ENCODE measurements at regions of chr5 and their contacts with region 1.

Region 1: DNA sequence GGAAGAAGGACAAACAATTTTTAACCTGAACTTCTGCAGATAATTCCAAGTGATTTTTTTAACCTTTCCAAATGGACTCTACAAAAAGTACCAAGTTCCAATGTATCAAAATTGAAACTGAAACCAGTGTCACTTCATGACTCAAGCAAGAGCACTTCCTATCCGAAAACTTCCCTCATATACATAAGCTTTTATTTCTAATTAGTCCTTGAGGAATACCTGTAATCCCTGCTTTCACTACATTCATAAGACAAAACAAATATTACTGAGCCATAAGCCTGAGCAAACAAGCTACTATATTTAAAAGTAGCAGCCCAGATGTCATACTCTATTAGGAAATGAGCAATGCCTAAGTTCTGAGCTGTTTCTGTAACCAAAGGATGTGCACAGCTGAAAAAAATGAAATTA is 224.4 kb downstream of the EBF1 start:
- DNase-seq: peak; percentile 70
- ATAC-seq: peak; percentile 41
- H3K4me3 ChIP-seq: peak overlapping the region in 2 of 5 experiments; percentile 12 to 34
- H3K4me3 Mint-ChIP-seq: peak overlapping the region; percentile 84
- H3K27ac ChIP-seq: peak overlapping the region; percentile 74 to 80
- H3K27ac Mint-ChIP-seq: peak overlapping the region; percentile 76
- H3K4me1 ChIP-seq: peaks cover 71 to 81% of the 10 kb centered on the region in 2 donors
- H3K4me1 Mint-ChIP-seq: peaks cover 89% of the 10 kb centered on the region
- H3K27me3 ChIP-seq: no peaks in the 10 kb centered on the region
- H3K27me3 Mint-ChIP-seq: no peaks in the 10 kb centered on the region
- CTCF ChIP-seq: no peak

Region 2: DNA sequence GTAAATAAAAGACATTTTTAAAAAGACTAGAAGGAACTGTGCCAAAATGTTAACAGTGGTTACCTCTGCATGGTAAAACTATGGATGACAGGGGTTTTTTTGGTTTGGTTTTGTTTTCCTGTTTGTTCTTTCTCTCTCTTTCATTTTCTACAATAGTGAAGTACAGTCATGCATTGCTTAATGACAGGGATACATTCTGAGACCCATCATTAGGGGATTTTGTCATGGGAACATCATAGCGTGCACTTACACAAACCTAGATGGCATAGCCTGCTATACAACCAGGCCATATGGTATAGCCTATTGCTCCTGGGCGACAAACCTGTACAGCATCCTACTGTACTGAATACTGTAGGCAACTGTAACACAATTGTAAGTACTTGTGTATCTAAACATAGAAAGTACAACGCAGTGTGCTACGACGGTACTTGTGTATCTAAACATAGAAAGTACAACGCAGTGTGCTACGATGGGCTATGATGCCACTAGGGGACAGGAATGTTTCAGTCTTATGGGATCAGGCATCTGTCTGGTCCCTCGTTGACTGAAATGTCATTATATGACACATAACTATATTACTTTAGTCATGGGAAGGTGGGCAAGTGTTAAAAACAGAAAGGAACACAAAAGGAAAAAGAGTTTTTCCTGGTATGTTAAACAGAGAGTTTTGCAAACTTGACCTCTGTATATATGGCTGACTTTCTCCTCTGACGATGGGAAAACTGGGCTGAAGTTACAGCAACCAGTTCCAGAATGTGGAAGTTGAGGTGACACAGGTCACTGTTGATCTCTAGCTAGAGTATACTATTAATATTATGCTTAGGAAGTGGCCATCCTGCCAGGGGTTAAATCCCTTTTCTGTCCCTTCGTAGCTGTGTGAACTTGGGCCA is 1292.3 kb before region 1 on chr5:
- CTCF ChIA-PET with region 1: no interaction called
- POLR2A ChIA-PET with region 1: no interaction called
- intact Hi-C with region 1: no loop called
- DNase-seq: peak; percentile 53
- ATAC-seq: peak; percentile 54
- H3K4me3 ChIP-seq: no peak overlapping the region
- H3K4me3 Mint-ChIP-seq: peak overlapping the region; percentile 41
- H3K27ac ChIP-seq: peak overlapping the region; percentile 44 to 63
- H3K27ac Mint-ChIP-seq: peak overlapping the region; percentile 57
- H3K4me1 ChIP-seq: peaks cover 40 to 56% of the 10 kb centered on the region in 2 donors
- H3K4me1 Mint-ChIP-seq: peaks cover 60% of the 10 kb centered on the region
- H3K27me3 ChIP-seq: no peaks in the 10 kb centered on the region
- H3K27me3 Mint-ChIP-seq: no peaks in the 10 kb centered on the region
- CTCF ChIP-seq: no peak

Region 3: GRCh38 chr5:158074992-158075769 is 800.1 kb before region 1 on chr5:
- CTCF ChIA-PET with region 1: interaction called, 3 read pairs
- POLR2A ChIA-PET with region 1: no interaction called
- intact Hi-C with region 1: loop called (anchors 10 kb)
- DNase-seq: peak; percentile 78
- ATAC-seq: peak; percentile 90
- H3K4me3 ChIP-seq: peak overlapping the region in 2 of 5 experiments; percentile 10 to 20
- H3K4me3 Mint-ChIP-seq: peak overlapping the region; percentile 12
- H3K27ac ChIP-seq: no peak overlapping the region
- H3K27ac Mint-ChIP-seq: peak overlapping the region; percentile 43
- H3K4me1 ChIP-seq: peaks cover 12 to 20% of the 10 kb centered on the region in 2 donors
- H3K4me1 Mint-ChIP-seq: peaks cover 21% of the 10 kb centered on the region
- H3K27me3 ChIP-seq: peaks cover 0 to 3% (median 0%) of the 10 kb centered on the region in 4 experiments
- H3K27me3 Mint-ChIP-seq: no peaks in the 10 kb centered on the region
- CTCF ChIP-seq: peak; percentile 82

Region 4: GRCh38 chr5:158751961-158752655 is 123.2 kb before region 1 on chr5:
- CTCF ChIA-PET with region 1: interaction called, 3 read pairs
- POLR2A ChIA-PET with region 1: no interaction called
- intact Hi-C with region 1: loop called (anchors 10 kb)
- DNase-seq: peak; percentile 79
- ATAC-seq: peak; percentile 80
- H3K4me3 ChIP-seq: peak overlapping the region; percentile 23 to 62 (median 34)
- H3K4me3 Mint-ChIP-seq: peak overlapping the region; percentile 87
- H3K27ac ChIP-seq: peak overlapping the region; percentile 78 to 81
- H3K27ac Mint-ChIP-seq: peak overlapping the region; percentile 67
- H3K4me1 ChIP-seq: peaks cover 60 to 70% of the 10 kb centered on the region in 2 donors
- H3K4me1 Mint-ChIP-seq: peaks cover 91% of the 10 kb centered on the region
- H3K27me3 ChIP-seq: no peaks in the 10 kb centered on the region
- H3K27me3 Mint-ChIP-seq: no peaks in the 10 kb centered on the region
- CTCF ChIP-seq: no peak

Region 5: DNA sequence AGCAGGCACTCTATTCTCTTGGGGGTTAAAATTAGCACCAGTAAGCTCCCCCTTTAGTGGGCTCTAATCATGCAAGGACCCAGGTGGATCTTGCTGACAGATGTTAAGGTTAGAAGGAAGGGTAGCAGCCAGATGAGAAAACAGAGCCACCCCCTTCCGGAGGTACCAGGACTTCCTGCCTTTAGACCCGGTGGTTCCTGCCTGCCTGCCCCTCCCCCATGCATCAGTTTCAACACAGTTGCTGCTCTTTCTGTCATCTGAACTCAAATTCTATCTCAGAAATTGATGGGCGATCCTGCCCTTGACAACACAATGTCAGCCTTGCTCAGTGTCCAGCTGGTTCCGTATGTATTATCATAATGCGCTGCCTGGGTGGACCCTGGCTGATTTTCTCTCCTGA is 62.9 kb before region 1 on chr5:
- CTCF ChIA-PET with region 1: no interaction called
- POLR2A ChIA-PET with region 1: no interaction called
- intact Hi-C with region 1: loop called (anchors 2 kb)
- DNase-seq: peak; percentile 89
- ATAC-seq: peak; percentile 89
- H3K4me3 ChIP-seq: peak overlapping the region in 2 of 5 experiments; percentile 32 to 43
- H3K4me3 Mint-ChIP-seq: peak overlapping the region; percentile 72
- H3K27ac ChIP-seq: peak overlapping the region; percentile 80 to 87
- H3K27ac Mint-ChIP-seq: peak overlapping the region; percentile 93
- H3K4me1 ChIP-seq: peaks cover 89 to 100% of the 10 kb centered on the region in 2 donors
- H3K4me1 Mint-ChIP-seq: peaks cover 98% of the 10 kb centered on the region
- H3K27me3 ChIP-seq: no peaks in the 10 kb centered on the region
- H3K27me3 Mint-ChIP-seq: no peaks in the 10 kb centered on the region
- CTCF ChIP-seq: no peak

Region 6: DNA sequence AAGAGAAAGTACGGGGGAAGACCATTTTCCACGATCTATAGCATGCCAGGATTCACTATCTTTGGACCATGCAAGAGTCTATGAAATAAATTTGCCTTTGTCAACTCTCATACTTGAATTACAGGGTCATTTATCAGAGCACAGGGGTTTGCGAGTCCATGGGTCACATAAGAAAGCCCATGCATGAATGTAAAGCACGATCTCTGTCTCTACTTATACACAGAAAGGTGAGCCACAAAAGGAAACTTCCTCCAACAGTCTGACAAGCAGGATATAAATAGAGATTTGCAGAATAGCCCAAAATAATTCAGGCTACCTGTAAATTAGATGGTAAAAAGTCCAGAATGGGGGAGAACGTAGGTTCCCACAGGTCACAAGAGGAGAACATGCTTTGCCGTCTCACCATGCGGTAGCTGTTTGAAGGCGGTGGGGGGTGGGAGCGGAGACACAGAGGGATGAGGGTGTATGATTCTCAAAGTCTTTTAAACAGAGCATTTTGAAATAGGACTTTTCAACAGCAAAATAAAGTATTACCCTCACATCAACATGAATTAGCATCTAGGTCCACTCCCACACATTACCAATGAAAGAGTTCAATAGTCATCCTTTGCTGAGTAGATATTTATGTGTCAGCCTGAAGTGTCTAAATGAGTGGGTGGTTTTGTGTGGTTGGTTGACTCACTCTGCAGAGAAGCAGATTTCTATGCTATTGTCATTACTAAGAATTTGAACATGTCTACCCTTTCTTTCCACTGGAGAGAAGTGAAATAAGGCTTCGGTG is 55.2 kb before region 1 on chr5:
- CTCF ChIA-PET with region 1: interaction called, 3 read pairs
- POLR2A ChIA-PET with region 1: no interaction called
- intact Hi-C with region 1: loop called (anchors 2 kb)
- DNase-seq: peak; percentile 55
- ATAC-seq: peak; percentile 56
- H3K4me3 ChIP-seq: peak overlapping the region; percentile 2 to 50 (median 19)
- H3K4me3 Mint-ChIP-seq: peak overlapping the region; percentile 82
- H3K27ac ChIP-seq: peak overlapping the region; percentile 82 to 87
- H3K27ac Mint-ChIP-seq: peak overlapping the region; percentile 80
- H3K4me1 ChIP-seq: peaks cover 98 to 99% of the 10 kb centered on the region in 2 donors
- H3K4me1 Mint-ChIP-seq: peaks cover 97% of the 10 kb centered on the region
- H3K27me3 ChIP-seq: no peaks in the 10 kb centered on the region
- H3K27me3 Mint-ChIP-seq: no peaks in the 10 kb centered on the region
- CTCF ChIP-seq: no peak

Region 7: DNA sequence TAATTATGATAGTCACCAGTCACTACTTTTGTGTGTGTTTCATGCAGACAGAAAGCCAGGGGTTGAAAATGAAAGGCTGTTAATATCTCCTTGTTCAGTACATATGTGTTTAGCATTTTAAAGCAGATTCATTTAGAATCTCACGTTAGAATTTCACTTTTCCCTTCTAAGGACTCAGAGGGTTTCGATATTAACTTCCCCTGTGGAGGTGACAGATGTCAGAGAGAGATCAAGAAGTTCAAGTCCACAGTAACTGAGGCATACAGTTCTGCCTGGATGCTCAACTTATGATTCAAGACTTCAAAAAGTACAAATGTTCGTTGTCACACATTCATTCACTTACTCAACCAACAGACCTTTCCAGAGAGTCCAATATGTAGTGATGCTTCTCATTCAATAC is 26.6 kb before region 1 on chr5:
- CTCF ChIA-PET with region 1: interaction called, 5 read pairs
- POLR2A ChIA-PET with region 1: no interaction called
- intact Hi-C with region 1: loop called (anchors 2 kb)
- DNase-seq: peak; percentile 58
- ATAC-seq: peak; percentile 40
- H3K4me3 ChIP-seq: peak overlapping the region in 2 of 5 experiments; percentile 1 to 21
- H3K4me3 Mint-ChIP-seq: peak overlapping the region; percentile 63
- H3K27ac ChIP-seq: peak overlapping the region; percentile 43 to 76
- H3K27ac Mint-ChIP-seq: peak overlapping the region; percentile 37
- H3K4me1 ChIP-seq: peaks cover 74 to 75% of the 10 kb centered on the region in 2 donors
- H3K4me1 Mint-ChIP-seq: peaks cover 85% of the 10 kb centered on the region
- H3K27me3 ChIP-seq: no peaks in the 10 kb centered on the region
- H3K27me3 Mint-ChIP-seq: no peaks in the 10 kb centered on the region
- CTCF ChIP-seq: no peak

Measured in B cell (primary cell).